Sigmoid colon (tissue), 7 donors: ENCODE measurements at regions of chr11 and their contacts with region 1.

Region 1: DNA sequence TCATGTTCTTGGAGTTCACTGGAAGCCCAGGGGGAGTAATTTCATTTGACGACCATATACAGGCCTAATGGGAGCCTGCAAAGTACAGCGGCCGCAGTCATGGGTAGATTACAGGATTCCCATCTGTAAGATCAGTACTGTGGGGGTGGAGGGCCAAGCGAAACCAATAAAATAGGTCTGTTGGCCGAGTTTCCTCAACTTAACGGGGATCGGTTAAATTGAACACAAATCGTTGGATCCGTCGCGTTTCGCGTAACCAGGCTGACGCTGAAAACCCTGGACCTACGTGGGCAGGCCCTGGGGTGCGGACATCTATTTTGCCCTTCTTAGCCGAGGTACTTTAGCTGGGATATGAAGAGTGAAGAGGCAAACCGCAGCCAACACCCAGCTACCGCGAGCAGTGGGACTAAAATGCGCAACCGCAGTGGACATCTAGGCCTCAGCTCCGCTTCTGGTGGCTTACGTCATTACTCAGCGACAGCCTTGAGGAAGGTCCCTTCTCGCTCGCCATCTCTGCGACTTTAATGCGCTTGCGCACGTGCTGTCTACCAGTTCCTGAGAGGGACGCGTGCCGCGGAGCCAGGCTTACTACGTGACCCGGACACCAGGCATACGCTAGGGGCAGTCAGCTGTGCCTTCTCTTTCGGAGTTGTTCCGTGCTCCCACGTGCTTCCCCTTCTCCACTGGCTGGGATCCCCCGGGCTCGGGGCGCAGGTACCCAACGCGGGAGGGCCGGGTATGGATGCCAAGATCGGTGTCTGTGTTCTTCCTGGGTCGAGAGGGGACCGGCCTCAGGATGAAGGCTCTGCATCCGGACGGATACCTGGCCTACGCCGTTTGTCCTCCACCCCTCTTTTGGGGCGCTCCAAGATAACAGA is at the start of gene NAT10:
- DNase-seq: peak; percentile 99
- H3K4me3 ChIP-seq: peak within 1 kb of the TSS; percentile 82 to 89 (median 84)
- H3K27ac ChIP-seq: peak within 1 kb of the TSS; percentile 87 to 95 (median 92)
- H3K4me1 ChIP-seq: peaks cover 0 to 29% (median 21%) of the 10 kb centered on the region in 4 donors
- H3K27me3 ChIP-seq: no peaks in the 10 kb centered on the region
- CTCF ChIP-seq: peak in 1 of 4 experiments; percentile 6
- EP300 ChIP-seq: no peak
- POLR2A ChIP-seq: peak; percentile 69 to 70
- total RNA-seq, gene NAT10: 13.2 to 28.0 (median 19.4) TPM

Region 2: GRCh38 chr11:33996498-33997454 is 108.5 kb before region 1 on chr11:
- intact Hi-C with region 1: loop called (anchors 2 kb)
- DNase-seq: peak; percentile 74
- H3K4me3 ChIP-seq: no peak overlapping the region
- H3K27ac ChIP-seq: no peak overlapping the region
- H3K4me1 ChIP-seq: peaks cover 0 to 12% (median 4%) of the 10 kb centered on the region in 4 donors
- H3K27me3 ChIP-seq: no peaks in the 10 kb centered on the region
- CTCF ChIP-seq: peak; percentile 55 to 84 (median 80)
- EP300 ChIP-seq: no peak
- POLR2A ChIP-seq: no peak

Region 3: GRCh38 chr11:34449013-34449412 is 343.7 kb after region 1 on chr11:
- intact Hi-C with region 1: loop called (anchors 10 kb)
- DNase-seq: no peak
- H3K4me3 ChIP-seq: no peak overlapping the region
- H3K27ac ChIP-seq: no peak overlapping the region
- H3K4me1 ChIP-seq: peaks cover 0 to 21% (median 2%) of the 10 kb centered on the region in 4 donors
- H3K27me3 ChIP-seq: no peaks in the 10 kb centered on the region
- CTCF ChIP-seq: no peak
- EP300 ChIP-seq: no peak
- POLR2A ChIP-seq: no peak

Region 4: DNA sequence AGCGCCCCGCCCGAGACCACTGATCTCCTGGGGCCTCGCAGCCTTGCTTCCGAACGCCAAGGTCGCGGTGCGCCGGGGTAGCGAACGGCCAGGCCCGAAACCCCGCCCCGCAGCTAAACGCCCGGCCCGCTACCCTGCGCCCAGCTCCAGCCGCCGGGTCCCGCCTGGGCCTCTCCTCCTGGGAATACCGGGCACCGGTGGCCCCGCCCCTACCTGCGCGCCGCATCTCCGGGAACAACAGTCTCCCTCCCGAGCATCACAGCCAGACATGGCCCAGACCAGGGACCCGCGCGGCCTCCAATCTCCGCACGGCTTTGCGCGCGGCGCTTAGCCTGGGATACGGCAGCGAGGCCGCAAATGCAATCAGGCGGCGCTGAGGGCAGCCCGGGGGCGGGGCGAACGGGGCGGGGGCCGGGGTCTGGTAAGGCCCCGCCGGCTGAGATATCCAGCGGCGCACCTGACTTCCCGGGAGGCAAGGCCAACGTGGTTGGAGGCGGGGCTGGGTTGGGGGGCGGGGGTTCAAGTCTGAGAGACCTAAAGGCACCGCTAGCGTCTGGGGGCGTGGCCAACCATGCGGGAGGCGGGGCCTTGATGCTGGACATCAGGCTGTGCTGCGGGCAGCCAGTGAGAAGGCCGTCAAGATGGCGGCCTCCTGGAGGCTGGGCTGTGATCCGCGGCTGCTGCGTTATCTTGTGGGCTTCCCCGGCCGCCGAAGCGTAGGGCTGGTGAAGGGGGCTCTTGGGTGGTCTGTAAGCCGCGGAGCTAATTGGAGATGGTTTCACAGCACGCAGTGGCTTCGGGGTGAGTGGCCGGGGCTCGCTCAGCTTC is 810.9 kb after region 1 on chr11 and contains the starts of genes APIP and PDHX:
- intact Hi-C with region 1: loop called (anchors 2 kb)
- DNase-seq: peak; percentile 99
- H3K4me3 ChIP-seq: peak within 1 kb of the TSS; percentile 80 to 93 (median 88)
- H3K27ac ChIP-seq: peak within 1 kb of the TSS; percentile 95 to 98 (median 96)
- H3K4me1 ChIP-seq: peaks cover 0 to 35% (median 28%) of the 10 kb centered on the region in 4 donors
- H3K27me3 ChIP-seq: no peaks in the 10 kb centered on the region
- CTCF ChIP-seq: no peak
- EP300 ChIP-seq: no peak
- POLR2A ChIP-seq: peak; percentile 94 to 96
- total RNA-seq, gene APIP: 33.0 to 43.9 (median 41.5) TPM
- total RNA-seq, gene PDHX: 27.7 to 32.8 (median 31.0) TPM